T-cell (primary cell): ENCODE measurements at regions of chr3 and their contacts with region 1.

Region 1: GRCh38 chr3:9649791-9650521 is 651 bp downstream of the MTMR14 start:
- DNase-seq: peak in 2 of 35 experiments; percentile 14 to 16
- ATAC-seq: peak; percentile 0 to 7 (median 2)
- H3K4me3 ChIP-seq: peak overlapping the region; percentile 88 to 98
- H3K4me3 Mint-ChIP-seq: peak overlapping the region; percentile 76 to 96 (median 88)
- H3K27ac ChIP-seq: peak overlapping the region; percentile 73
- H3K27ac Mint-ChIP-seq: peak overlapping the region; percentile 89 to 92
- H3K4me1 ChIP-seq: peaks cover 7 to 40% of the 10 kb centered on the region in 2 experiments
- H3K4me1 Mint-ChIP-seq: peaks cover 32 to 45% (median 43%) of the 10 kb centered on the region in 3 donors
- H3K27me3 ChIP-seq: no peaks in the 10 kb centered on the region
- H3K27me3 Mint-ChIP-seq: no peaks in the 10 kb centered on the region

Region 2: GRCh38 chr3:9238721-9239295 is 411.1 kb before region 1 on chr3:
- CTCF ChIA-PET with region 1: no interaction called
- POLR2A ChIA-PET with region 1: no interaction called
- DNase-seq: no peak
- ATAC-seq: no peak
- H3K4me3 ChIP-seq: no peak overlapping the region
- H3K4me3 Mint-ChIP-seq: no peak overlapping the region
- H3K27ac ChIP-seq: no peak overlapping the region
- H3K27ac Mint-ChIP-seq: no peak overlapping the region
- H3K4me1 ChIP-seq: no peaks in the 10 kb centered on the region
- H3K4me1 Mint-ChIP-seq: no peaks in the 10 kb centered on the region
- H3K27me3 ChIP-seq: no peaks in the 10 kb centered on the region
- H3K27me3 Mint-ChIP-seq: peaks cover 0 to 5% of the 10 kb centered on the region in 2 donors

Region 3: GRCh38 chr3:9687514-9687913 is 37.6 kb after region 1 on chr3:
- CTCF ChIA-PET with region 1: no interaction called
- POLR2A ChIA-PET with region 1: interaction called in 1 of 2 experiments, 11 read pairs
- DNase-seq: no peak
- ATAC-seq: no peak
- H3K4me3 ChIP-seq: no peak overlapping the region
- H3K4me3 Mint-ChIP-seq: no peak overlapping the region
- H3K27ac ChIP-seq: no peak overlapping the region
- H3K27ac Mint-ChIP-seq: no peak overlapping the region
- H3K4me1 ChIP-seq: no peaks in the 10 kb centered on the region
- H3K4me1 Mint-ChIP-seq: no peaks in the 10 kb centered on the region
- H3K27me3 ChIP-seq: no peaks in the 10 kb centered on the region
- H3K27me3 Mint-ChIP-seq: no peaks in the 10 kb centered on the region